GM13977 (cell line): ENCODE measurements at regions of chr17 and their contacts with region 1.

Region 1: DNA sequence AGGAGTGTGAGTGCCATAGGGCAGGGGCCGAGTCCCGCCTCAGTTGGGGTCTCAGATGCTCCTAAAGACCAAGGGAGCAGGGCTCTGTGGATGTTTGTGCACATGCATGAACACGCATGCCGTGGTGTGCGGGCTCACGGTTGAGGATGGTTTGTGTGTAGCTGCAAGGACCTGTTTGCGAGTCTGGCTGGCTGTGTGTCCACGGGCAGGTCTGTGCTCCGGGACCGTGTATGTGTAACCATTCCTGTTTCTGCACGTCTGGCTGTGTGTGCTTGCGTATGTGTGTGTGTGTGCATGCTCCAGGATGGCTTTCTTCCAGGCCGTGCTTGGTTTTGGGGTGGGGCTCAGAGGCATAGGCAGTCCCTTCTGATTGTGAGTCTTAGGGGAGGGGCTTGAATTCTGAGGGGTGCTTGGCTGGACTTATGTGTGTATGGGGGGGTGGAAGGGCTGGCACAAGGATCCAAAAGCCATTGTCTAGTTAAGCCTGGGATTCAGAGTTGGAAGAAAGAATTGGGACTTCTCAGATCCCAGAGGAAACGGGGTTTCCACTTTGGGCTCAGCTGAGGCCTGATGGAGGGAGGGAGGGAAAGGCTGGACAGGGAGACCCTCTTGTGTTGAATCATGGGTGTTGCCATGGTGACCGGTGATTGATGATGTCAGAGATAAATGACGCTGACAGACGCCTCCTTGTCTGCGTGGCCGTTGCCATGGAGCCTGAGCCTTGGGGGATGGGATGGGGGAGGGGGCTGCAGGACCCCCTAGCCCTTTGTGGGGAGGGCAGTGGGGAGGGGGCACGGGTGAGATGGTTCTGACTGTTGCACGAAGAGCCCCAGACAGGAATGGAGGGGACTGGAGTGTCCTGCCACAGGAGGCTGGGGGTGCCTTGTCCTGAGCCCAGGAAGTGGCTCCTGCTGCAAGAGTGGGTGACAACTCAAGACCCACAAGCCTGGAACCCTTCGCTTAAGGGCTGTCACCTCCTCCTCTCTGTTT is 14.3 kb downstream of the GJD3 start:
- DNase-seq: no peak
- CTCF ChIP-seq: no peak

Region 2: GRCh38 chr17:40303009-40303657 is 47.1 kb before region 1 on chr17:
- in situ Hi-C with region 1: loop called (anchors 5 kb)
- DNase-seq: peak; percentile 66
- CTCF ChIP-seq: peak; percentile 69

Region 3: GRCh38 chr17:40450175-40450574 is 100.0 kb after region 1 on chr17:
- in situ Hi-C with region 1: no loop called
- DNase-seq: peak; percentile 62
- CTCF ChIP-seq: peak; percentile 63